GM13976 (cell line): ENCODE measurements at regions of chr13 and their contacts with region 1.

Region 1: GRCh38 chr13:25574437-25575411 is 202.9 kb downstream of the ATP8A2 start:
- DNase-seq: peak; percentile 52
- CTCF ChIP-seq: peak; percentile 78

Region 2: GRCh38 chr13:25846227-25846984 is 271.7 kb after region 1 on chr13:
- in situ Hi-C with region 1: no loop called
- DNase-seq: no peak
- CTCF ChIP-seq: no peak

Region 3: DNA sequence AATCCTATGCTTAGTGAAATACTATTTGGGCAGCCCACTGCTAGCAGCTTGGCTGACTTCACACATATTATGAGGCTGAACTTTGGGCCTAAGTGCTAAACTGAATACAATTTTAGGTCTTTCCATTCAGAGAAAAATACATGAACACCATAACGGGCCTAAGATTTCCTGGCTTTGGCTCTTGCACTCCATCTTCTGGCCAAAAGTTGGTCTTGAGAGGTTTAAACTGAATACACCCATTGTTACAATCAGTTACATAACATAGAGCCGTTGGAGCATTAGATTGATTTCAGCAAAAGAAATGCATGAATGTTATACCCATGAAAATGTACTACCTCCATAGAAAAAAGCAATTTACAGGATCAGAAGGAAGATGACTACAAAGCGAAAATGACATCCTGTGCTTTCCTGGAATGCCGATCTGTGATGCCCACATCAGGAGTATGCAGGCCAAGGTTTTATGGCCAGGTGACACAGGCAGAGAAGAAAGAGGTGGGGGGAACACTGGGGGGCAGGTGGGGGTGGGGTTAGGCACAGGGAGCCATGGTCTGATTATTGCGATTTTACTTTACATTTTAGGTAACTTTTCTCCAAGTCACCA is 488.2 kb after region 1 on chr13:
- in situ Hi-C with region 1: loop called (anchors 5 kb)
- DNase-seq: peak; percentile 38
- CTCF ChIP-seq: no peak